ENCODE measurements at regions of chr11 and their contacts with region 1.

Region 1: GRCh38 chr11:95150946-95151684 is 61.5 kb downstream of the ENDOD1 start:
- DNase-seq: peak; percentile 96
- H3K4me3 ChIP-seq: peak overlapping the region; percentile 39 to 59 (median 51)
- H3K27ac ChIP-seq: peak overlapping the region; percentile 66 to 86 (median 81)
- H3K4me1 ChIP-seq: peaks cover 0 to 45% (median 30%) of the 10 kb centered on the region in 4 donors
- H3K27me3 ChIP-seq: no peaks in the 10 kb centered on the region
- CTCF ChIP-seq: peak; percentile 77 to 94 (median 89)
- EP300 ChIP-seq: no peak
- POLR2A ChIP-seq: no peak

Region 2: GRCh38 chr11:94938095-94939055 is 212.7 kb before region 1 on chr11:
- intact Hi-C with region 1: no loop called
- DNase-seq: peak; percentile 90
- H3K4me3 ChIP-seq: no peak overlapping the region
- H3K27ac ChIP-seq: peak overlapping the region in 3 of 4 donors; percentile 11 to 65 (median 24)
- H3K4me1 ChIP-seq: peaks cover 0 to 10% (median 2%) of the 10 kb centered on the region in 4 donors
- H3K27me3 ChIP-seq: no peaks in the 10 kb centered on the region
- CTCF ChIP-seq: no peak
- EP300 ChIP-seq: no peak
- POLR2A ChIP-seq: no peak

Region 3: GRCh38 chr11:95089620-95090542 is 61.2 kb before region 1 on chr11 and contains the start of gene ENDOD1:
- intact Hi-C with region 1: loop called (anchors 2 kb)
- DNase-seq: peak; percentile 88
- H3K4me3 ChIP-seq: peak within 1 kb of the TSS; percentile 64 to 99 (median 78)
- H3K27ac ChIP-seq: peak within 1 kb of the TSS; percentile 85 to 97 (median 92)
- H3K4me1 ChIP-seq: peaks cover 0 to 19% (median 11%) of the 10 kb centered on the region in 4 donors
- H3K27me3 ChIP-seq: no peaks in the 10 kb centered on the region
- CTCF ChIP-seq: no peak
- EP300 ChIP-seq: no peak
- POLR2A ChIP-seq: peak in 1 of 2 donors; percentile 30
- total RNA-seq, gene ENDOD1: 18.1 to 31.4 (median 21.0) TPM

Region 4: GRCh38 chr11:95322546-95322945 is 171.4 kb after region 1 on chr11:
- intact Hi-C with region 1: no loop called
- DNase-seq: no peak
- H3K4me3 ChIP-seq: no peak overlapping the region
- H3K27ac ChIP-seq: no peak overlapping the region
- H3K4me1 ChIP-seq: peaks cover 0 to 8% (median 0%) of the 10 kb centered on the region in 4 donors
- H3K27me3 ChIP-seq: no peaks in the 10 kb centered on the region
- CTCF ChIP-seq: no peak
- EP300 ChIP-seq: no peak
- POLR2A ChIP-seq: no peak

Region 5: GRCh38 chr11:95337175-95337957 is 186.3 kb after region 1 on chr11:
- intact Hi-C with region 1: loop called (anchors 5 kb)
- DNase-seq: peak; percentile 79
- H3K4me3 ChIP-seq: peak overlapping the region in 2 of 4 donors; percentile 9 to 18
- H3K27ac ChIP-seq: peak overlapping the region; percentile 74 to 87 (median 84)
- H3K4me1 ChIP-seq: peaks cover 0 to 48% (median 38%) of the 10 kb centered on the region in 4 donors
- H3K27me3 ChIP-seq: no peaks in the 10 kb centered on the region
- CTCF ChIP-seq: no peak
- EP300 ChIP-seq: no peak
- POLR2A ChIP-seq: no peak

Region 6: DNA sequence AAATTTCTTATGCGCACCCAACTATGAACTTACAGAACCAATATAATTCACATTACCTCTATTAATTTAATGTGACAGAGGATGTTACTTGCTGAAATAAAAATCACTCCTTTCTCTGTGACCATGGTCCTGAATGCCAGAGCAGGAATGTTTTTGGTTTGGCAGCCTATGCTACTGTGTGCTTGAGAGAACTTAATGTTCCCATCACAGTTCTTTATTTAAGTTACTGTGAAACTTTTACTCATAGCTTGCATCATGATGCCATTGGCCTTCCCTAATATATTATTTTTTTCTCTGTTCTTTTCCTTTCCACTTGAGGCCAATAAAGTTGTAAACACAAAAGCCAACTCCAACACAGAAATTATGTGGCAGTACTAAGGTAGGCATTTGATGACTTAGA is 496.2 kb after region 1 on chr11:
- intact Hi-C with region 1: loop called (anchors 5 kb)
- DNase-seq: peak; percentile 78
- H3K4me3 ChIP-seq: peak overlapping the region in 1 of 4 donors; percentile 14
- H3K27ac ChIP-seq: peak overlapping the region; percentile 76 to 83 (median 80)
- H3K4me1 ChIP-seq: peaks cover 0 to 26% (median 19%) of the 10 kb centered on the region in 4 donors
- H3K27me3 ChIP-seq: no peaks in the 10 kb centered on the region
- CTCF ChIP-seq: no peak
- EP300 ChIP-seq: peak; percentile 76 to 96 (median 92)
- POLR2A ChIP-seq: no peak

Region 7: GRCh38 chr11:95764267-95764898 is 613.3 kb after region 1 on chr11:
- intact Hi-C with region 1: loop called (anchors 1 kb)
- DNase-seq: no peak
- H3K4me3 ChIP-seq: no peak overlapping the region
- H3K27ac ChIP-seq: no peak overlapping the region
- H3K4me1 ChIP-seq: no peaks in the 10 kb centered on the region
- H3K27me3 ChIP-seq: no peaks in the 10 kb centered on the region
- CTCF ChIP-seq: peak; percentile 59 to 69 (median 60)
- EP300 ChIP-seq: no peak
- POLR2A ChIP-seq: no peak